ENCODE measurements at regions of chr2 and their contacts with region 1.

Region 1: DNA sequence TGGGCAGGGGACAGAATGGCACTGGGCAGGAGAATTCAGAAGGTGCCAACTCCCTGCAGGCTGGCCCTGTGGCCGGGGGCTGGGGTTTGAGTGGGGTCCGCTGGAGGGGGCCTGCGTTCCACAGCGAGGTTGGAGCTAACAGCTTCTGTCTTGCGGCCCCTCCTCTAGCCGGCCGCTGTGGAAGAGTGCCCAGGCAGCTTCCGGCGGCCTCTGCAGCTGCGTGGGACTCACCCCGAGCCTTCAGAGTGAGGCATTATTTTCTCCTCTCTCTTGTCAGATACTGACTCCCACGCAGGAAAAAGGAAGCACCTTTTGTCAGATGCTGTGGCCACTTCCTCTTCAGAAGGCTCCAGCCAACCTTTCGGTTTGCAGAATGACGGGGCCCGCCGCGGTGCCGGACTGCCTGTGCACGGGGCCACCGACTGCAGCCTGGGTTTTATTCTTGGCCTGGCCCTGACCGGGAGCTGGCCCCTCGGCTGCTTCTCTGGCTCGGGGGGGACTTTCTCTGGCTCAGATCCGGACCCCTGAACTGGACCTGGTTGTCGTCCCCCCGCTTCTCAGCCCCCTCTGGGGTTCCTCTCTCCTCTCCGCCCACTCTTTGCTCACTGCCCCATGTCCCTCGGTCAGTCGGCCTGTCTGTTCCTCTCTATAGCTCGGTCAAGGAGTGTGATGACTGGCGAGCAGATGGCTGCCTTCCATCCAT is 40.1 kb downstream of the ARHGAP25 start:
- DNase-seq: peak; percentile 97
- H3K4me3 ChIP-seq: peak overlapping the region; percentile 55 to 79 (median 60)
- H3K27ac ChIP-seq: peak overlapping the region; percentile 92 to 98 (median 96)
- H3K4me1 ChIP-seq: peaks cover 86 to 100% (median 99%) of the 10 kb centered on the region in 6 donors
- H3K27me3 ChIP-seq: no peaks in the 10 kb centered on the region
- CTCF ChIP-seq: no peak
- POLR2A ChIP-seq: peak; percentile 30 to 93 (median 50)

Region 2: DNA sequence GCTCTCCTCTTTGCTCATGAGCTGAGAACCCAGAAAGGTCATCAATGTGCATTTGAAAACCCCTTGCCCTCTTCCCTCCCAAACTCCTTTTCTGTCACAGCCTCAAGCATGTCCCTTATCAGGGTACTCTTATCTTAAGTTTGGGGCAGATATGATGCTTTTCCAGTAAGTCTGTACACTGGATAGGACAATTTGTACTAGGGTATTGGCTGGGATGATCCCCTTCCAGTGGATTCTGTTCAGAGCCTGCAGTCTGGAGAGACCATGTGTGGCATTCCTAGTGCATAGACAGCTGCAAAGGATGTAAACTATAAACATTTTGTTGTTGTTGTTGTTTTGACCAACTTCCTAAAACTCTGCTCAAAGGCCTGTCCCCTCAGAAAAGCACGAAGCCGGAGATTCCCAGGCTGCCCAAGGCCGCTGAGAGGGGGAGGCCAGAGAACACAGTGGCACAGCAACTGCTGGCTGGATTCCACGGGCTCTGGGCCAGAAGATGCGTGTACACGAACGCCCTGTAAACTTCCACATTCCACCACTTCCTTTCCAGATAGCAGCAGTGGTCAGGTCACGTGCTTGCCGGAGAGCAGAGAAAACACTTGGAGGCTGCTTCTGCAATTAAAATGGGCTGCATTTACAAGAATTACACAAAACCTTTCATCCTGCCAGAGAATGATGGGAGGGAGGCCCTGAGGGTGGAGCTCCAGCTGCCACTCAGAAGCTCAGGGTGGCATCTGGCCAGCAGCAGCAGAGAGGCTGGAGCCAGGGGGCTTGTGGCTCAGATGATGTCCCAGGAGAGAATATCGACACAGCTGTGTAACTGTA is 54.4 kb after region 1 on chr2:
- intact Hi-C with region 1: loop called (anchors 10 kb)
- DNase-seq: peak; percentile 96
- H3K4me3 ChIP-seq: peak overlapping the region in 1 of 8 donors; percentile 47
- H3K27ac ChIP-seq: peak overlapping the region; percentile 49 to 92 (median 88)
- H3K4me1 ChIP-seq: peaks cover 46 to 91% (median 68%) of the 10 kb centered on the region in 6 donors
- H3K27me3 ChIP-seq: no peaks in the 10 kb centered on the region
- CTCF ChIP-seq: peak in 5 of 11 experiments; percentile 10 to 54 (median 36)
- POLR2A ChIP-seq: no peak